Aorta (tissue), 5 donors: ENCODE measurements at regions of chr15 and their contacts with region 1.

Region 1: GRCh38 chr15:83919319-83919830 is 265.5 kb downstream of the ADAMTSL3 start:
- DNase-seq: no peak
- ATAC-seq: no peak
- H3K4me3 ChIP-seq: no peak overlapping the region
- H3K27ac ChIP-seq: no peak overlapping the region
- H3K4me1 ChIP-seq: no peaks in the 10 kb centered on the region
- H3K27me3 ChIP-seq: no peaks in the 10 kb centered on the region

Region 2: GRCh38 chr15:83709246-83709645 is 210.1 kb before region 1 on chr15:
- intact Hi-C with region 1: loop called in 1 of 2 experiments (anchors 10 kb)
- DNase-seq: no peak
- ATAC-seq: no peak
- H3K4me3 ChIP-seq: no peak overlapping the region
- H3K27ac ChIP-seq: no peak overlapping the region
- H3K4me1 ChIP-seq: peaks cover 14 to 53% of the 10 kb centered on the region in 2 donors
- H3K27me3 ChIP-seq: no peaks in the 10 kb centered on the region

Region 3: GRCh38 chr15:83854321-83854720 is 65.1 kb before region 1 on chr15:
- intact Hi-C with region 1: no loop called
- DNase-seq: no peak
- ATAC-seq: no peak
- H3K4me3 ChIP-seq: no peak overlapping the region
- H3K27ac ChIP-seq: no peak overlapping the region
- H3K4me1 ChIP-seq: peaks cover 0 to 2% of the 10 kb centered on the region in 2 donors
- H3K27me3 ChIP-seq: no peaks in the 10 kb centered on the region

Region 4: DNA sequence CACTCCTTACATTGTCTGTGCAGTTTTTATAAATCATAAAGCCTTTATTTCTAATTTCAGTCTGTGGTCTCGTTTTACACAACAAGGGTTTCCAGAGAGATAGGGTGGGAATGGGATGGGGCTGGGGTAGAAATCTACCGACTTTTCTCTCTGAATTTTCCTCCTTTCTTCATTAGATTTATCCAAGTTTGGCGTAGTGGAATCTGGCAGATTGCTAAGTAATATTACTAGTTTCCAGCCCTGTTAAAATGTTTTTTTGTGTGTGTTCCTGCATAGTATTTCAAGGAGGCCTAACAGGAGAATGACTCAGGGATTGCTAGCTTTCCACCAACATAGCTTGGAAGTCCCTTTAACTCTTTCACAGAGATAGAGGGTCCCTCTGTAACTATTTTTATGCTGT is 130.7 kb after region 1 on chr15:
- intact Hi-C with region 1: no loop called
- DNase-seq: no peak
- ATAC-seq: no peak
- H3K4me3 ChIP-seq: no peak overlapping the region
- H3K27ac ChIP-seq: no peak overlapping the region
- H3K4me1 ChIP-seq: no peaks in the 10 kb centered on the region
- H3K27me3 ChIP-seq: no peaks in the 10 kb centered on the region